Natural killer cell (primary cell): ENCODE measurements at regions of chr19 and their contacts with region 1.

Region 1: GRCh38 chr19:18152444-18152816 is 533 bp upstream of the PIK3R2 start:
- DNase-seq: peak; percentile 99 to 100
- ATAC-seq: peak; percentile 65 to 82 (median 67)
- H3K4me3 ChIP-seq: peak overlapping the region; percentile 69
- H3K4me3 Mint-ChIP-seq: peak overlapping the region; percentile 95
- H3K27ac ChIP-seq: peak overlapping the region; percentile 91
- H3K27ac Mint-ChIP-seq: peak overlapping the region; percentile 89 to 97
- H3K4me1 ChIP-seq: peaks cover 61% of the 10 kb centered on the region
- H3K4me1 Mint-ChIP-seq: peaks cover 41 to 69% of the 10 kb centered on the region in 2 donors
- H3K27me3 ChIP-seq: no peaks in the 10 kb centered on the region
- H3K27me3 Mint-ChIP-seq: peaks cover 0 to 2% of the 10 kb centered on the region in 2 donors
- CTCF ChIP-seq: peak; percentile 79

Region 2: DNA sequence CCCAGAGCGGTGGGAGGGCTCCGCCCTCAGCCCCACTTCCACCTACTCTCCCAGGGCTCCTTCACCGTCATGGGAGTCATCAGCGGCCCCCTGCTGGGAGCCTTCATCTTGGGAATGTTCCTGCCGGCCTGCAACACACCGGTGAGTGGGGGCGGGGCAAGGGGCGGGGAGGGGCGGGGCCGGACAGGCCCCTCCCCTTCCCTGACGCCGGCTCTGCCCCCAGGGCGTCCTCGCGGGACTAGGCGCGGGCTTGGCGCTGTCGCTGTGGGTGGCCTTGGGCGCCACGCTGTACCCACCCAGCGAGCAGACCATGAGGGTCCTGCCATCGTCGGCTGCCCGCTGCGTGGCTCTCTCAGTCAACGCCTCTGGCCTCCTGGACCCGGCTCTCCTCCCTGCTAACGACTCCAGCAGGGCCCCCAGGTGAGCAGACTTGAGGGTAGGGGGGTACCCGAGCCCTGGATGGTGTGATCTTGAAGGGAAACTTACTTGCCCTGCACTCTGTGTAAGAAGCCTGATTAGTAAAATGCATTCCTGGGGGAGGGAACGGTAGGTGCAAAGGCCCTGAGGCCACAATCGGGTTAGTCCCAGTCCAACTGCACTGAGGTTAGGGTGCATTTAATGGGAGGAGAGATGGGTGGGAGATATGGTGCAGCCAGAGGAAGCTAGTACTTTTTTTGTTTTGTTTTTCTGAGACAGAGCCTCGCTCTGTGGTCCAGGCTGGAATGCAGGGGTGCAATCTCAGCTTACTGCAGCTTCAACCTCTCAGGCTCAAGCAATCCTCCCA is 268.6 kb before region 1 on chr19:
- intact Hi-C with region 1: no loop called
- DNase-seq: no peak
- ATAC-seq: no peak
- H3K4me3 ChIP-seq: no peak overlapping the region
- H3K4me3 Mint-ChIP-seq: no peak overlapping the region
- H3K27ac ChIP-seq: no peak overlapping the region
- H3K27ac Mint-ChIP-seq: no peak overlapping the region
- H3K4me1 ChIP-seq: peaks cover 8% of the 10 kb centered on the region
- H3K4me1 Mint-ChIP-seq: no peaks in the 10 kb centered on the region
- H3K27me3 ChIP-seq: no peaks in the 10 kb centered on the region
- H3K27me3 Mint-ChIP-seq: no peaks in the 10 kb centered on the region
- CTCF ChIP-seq: no peak

Region 3: GRCh38 chr19:17938092-17938845 is 214.2 kb before region 1 on chr19:
- intact Hi-C with region 1: loop called (anchors 1 kb)
- DNase-seq: peak; percentile 85 to 92
- ATAC-seq: peak; percentile 94 to 98 (median 98)
- H3K4me3 ChIP-seq: no peak overlapping the region
- H3K4me3 Mint-ChIP-seq: no peak overlapping the region
- H3K27ac ChIP-seq: no peak overlapping the region
- H3K27ac Mint-ChIP-seq: no peak overlapping the region
- H3K4me1 ChIP-seq: peaks cover 10% of the 10 kb centered on the region
- H3K4me1 Mint-ChIP-seq: peaks cover 6% of the 10 kb centered on the region in 2 donors
- H3K27me3 ChIP-seq: no peaks in the 10 kb centered on the region
- H3K27me3 Mint-ChIP-seq: no peaks in the 10 kb centered on the region
- CTCF ChIP-seq: peak; percentile 81

Region 4: DNA sequence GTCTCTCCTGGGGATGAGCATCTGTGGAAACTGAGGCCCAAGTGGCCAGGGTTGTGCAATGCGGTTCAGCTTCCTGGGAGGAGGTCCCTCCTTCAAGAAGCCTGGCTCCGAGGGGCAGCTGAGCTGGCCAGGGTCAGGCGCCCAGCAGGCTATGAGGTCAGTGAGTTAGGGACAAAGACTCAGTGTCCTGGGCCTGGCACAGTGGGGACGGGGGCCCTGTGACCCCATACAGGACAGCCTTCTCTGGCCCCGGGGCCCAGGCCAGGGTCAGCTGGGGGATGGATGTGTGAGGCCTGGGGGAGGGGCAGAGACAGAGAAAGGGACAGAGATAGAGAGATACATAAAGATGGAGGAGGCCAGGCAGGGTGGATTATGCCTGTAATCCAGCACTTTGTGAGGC is 62.7 kb before region 1 on chr19:
- intact Hi-C with region 1: loop called (anchors 2 kb)
- DNase-seq: peak in 1 of 2 donors; percentile 22
- ATAC-seq: no peak
- H3K4me3 ChIP-seq: no peak overlapping the region
- H3K4me3 Mint-ChIP-seq: peak overlapping the region; percentile 87
- H3K27ac ChIP-seq: peak overlapping the region; percentile 98
- H3K27ac Mint-ChIP-seq: peak overlapping the region; percentile 92 to 99
- H3K4me1 ChIP-seq: peaks cover 75% of the 10 kb centered on the region
- H3K4me1 Mint-ChIP-seq: peaks cover 41 to 58% of the 10 kb centered on the region in 2 donors
- H3K27me3 ChIP-seq: no peaks in the 10 kb centered on the region
- H3K27me3 Mint-ChIP-seq: no peaks in the 10 kb centered on the region
- CTCF ChIP-seq: no peak

Region 5: DNA sequence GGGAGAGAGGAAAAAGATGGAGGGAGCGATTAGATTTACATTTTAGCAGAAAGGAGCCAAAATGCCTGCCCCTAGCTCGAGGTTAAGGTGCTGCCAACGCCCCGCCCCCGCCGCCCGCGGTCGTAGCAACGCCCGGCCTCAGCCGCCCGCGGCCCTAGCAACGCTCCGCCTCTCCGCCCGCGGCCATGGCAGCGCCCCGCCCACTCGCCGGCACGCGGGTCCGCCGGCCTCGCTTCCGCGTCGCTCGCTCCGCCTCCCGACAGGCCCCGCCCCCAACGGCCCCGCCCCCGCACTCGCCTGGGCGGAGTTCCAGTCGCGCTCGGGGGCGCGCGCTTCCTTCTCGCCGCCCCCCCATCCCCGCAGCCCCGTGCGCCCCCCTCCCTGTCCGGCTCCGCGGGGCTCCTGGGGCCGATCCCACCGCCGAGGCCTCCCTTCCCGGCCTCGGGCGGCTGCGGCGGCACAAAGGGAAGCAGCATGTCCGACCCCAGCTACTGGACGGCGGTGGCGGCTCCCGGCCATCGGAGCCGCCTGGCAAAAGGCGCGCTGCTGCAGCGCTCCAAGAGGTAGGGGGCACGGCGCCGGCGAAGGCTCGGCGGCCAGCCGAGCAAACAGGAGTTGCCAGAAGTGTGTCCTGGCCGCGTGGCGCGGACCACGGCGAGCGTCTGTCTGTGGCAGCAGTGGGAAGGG is 34.6 kb before region 1 on chr19:
- intact Hi-C with region 1: loop called (anchors 2 kb)
- DNase-seq: peak; percentile 98 to 99
- ATAC-seq: peak; percentile 89 to 96 (median 92)
- H3K4me3 ChIP-seq: peak overlapping the region; percentile 83
- H3K4me3 Mint-ChIP-seq: peak overlapping the region; percentile 91
- H3K27ac ChIP-seq: peak overlapping the region; percentile 74
- H3K27ac Mint-ChIP-seq: peak overlapping the region; percentile 91 to 99
- H3K4me1 ChIP-seq: peaks cover 46% of the 10 kb centered on the region
- H3K4me1 Mint-ChIP-seq: peaks cover 30 to 61% of the 10 kb centered on the region in 2 donors
- H3K27me3 ChIP-seq: no peaks in the 10 kb centered on the region
- H3K27me3 Mint-ChIP-seq: no peaks in the 10 kb centered on the region
- CTCF ChIP-seq: no peak